SK-N-SH (cell line): ENCODE measurements at regions of chr11 and their contacts with region 1.

Region 1: GRCh38 chr11:67613960-67614715 is 7.4 kb downstream of the NDUFV1 start:
- DNase-seq: peak; percentile 84
- H3K4me3 ChIP-seq: no peak overlapping the region
- H3K27ac ChIP-seq: no peak overlapping the region
- H3K4me1 ChIP-seq: no peaks in the 10 kb centered on the region; a peak in 1 of 4 replicates
- H3K27me3 ChIP-seq: no peaks in the 10 kb centered on the region
- CTCF ChIP-seq: peak; percentile 71
- EP300 ChIP-seq: no peak
- RAD21 ChIP-seq: peak; percentile 35

Region 2: GRCh38 chr11:67535561-67535960 is 78.6 kb before region 1 on chr11:
- CTCF ChIA-PET with region 1: no interaction called
- POLR2A ChIA-PET with region 1: no interaction called
- DNase-seq: no peak
- H3K4me3 ChIP-seq: no peak overlapping the region
- H3K27ac ChIP-seq: no peak overlapping the region
- H3K4me1 ChIP-seq: no peaks in the 10 kb centered on the region
- H3K27me3 ChIP-seq: no peaks in the 10 kb centered on the region
- CTCF ChIP-seq: no peak
- EP300 ChIP-seq: no peak
- RAD21 ChIP-seq: no peak

Region 3: DNA sequence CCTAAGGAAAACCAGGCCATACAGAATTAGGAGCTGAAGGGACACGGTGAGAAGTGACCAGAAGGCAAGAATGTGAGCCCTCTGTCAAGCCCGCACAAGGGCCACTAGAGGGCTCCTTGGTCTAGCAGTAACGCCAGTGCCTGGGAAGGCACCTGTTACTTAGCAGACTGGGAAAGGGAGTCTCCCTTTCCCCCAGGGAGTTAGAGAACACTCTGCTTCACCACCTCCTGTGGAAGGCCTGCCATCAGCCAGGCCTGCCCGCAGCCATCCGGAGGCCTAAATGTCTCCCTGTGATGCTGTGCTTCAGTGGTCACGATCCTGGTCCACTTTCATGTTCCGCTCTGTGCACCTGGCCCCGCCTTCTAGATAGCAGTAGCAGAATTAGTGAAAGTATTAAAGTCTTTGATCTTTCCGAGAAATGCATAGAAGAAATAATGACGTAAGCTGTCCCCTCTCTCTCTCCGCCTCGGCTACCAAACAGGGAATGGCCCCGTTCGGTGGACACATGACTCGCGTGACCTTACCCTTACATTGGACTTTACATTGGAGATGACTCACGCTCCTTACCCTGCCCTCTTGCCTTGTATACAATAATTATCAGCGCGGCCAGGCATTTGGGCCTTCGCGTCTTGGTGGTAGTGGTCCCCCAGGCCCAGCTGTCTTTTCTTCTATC is 41.3 kb before region 1 on chr11:
- CTCF ChIA-PET with region 1: interaction called, 14 read pairs
- POLR2A ChIA-PET with region 1: no interaction called
- DNase-seq: peak; percentile 53
- H3K4me3 ChIP-seq: no peak overlapping the region
- H3K27ac ChIP-seq: no peak overlapping the region
- H3K4me1 ChIP-seq: peaks cover 0 to 6% of the 10 kb centered on the region in 2 experiments; a peak in 1 of 4 replicates
- H3K27me3 ChIP-seq: peaks cover 6% of the 10 kb centered on the region
- CTCF ChIP-seq: peak; percentile 64
- EP300 ChIP-seq: no peak
- RAD21 ChIP-seq: peak; percentile 79

Region 4: GRCh38 chr11:67583247-67584204 is 30.6 kb before region 1 on chr11 and contains the start of gene GSTP1:
- CTCF ChIA-PET with region 1: interaction called, 24 read pairs
- POLR2A ChIA-PET with region 1: interaction called, 4 read pairs
- DNase-seq: peak; percentile 95
- H3K4me3 ChIP-seq: peak within 1 kb of the TSS; percentile 68 to 77
- H3K27ac ChIP-seq: peak within 1 kb of the TSS; percentile 61 to 84
- H3K4me1 ChIP-seq: peaks cover 10 to 14% of the 10 kb centered on the region in 2 experiments; a peak in 3 of 4 replicates
- H3K27me3 ChIP-seq: no peaks in the 10 kb centered on the region
- CTCF ChIP-seq: peak; percentile 74
- EP300 ChIP-seq: peak in 1 of 2 experiments; percentile 34; a peak in 2 of 4 replicates
- RAD21 ChIP-seq: peak; percentile 51
- polyA plus RNA-seq, gene GSTP1: 488 and 745 TPM in 2 replicates

Region 5: GRCh38 chr11:67592880-67593564 is 21.1 kb before region 1 on chr11:
- CTCF ChIA-PET with region 1: interaction called, 10 read pairs
- POLR2A ChIA-PET with region 1: interaction called, 3 read pairs
- DNase-seq: no peak
- H3K4me3 ChIP-seq: no peak overlapping the region
- H3K27ac ChIP-seq: no peak overlapping the region
- H3K4me1 ChIP-seq: no peaks in the 10 kb centered on the region
- H3K27me3 ChIP-seq: no peaks in the 10 kb centered on the region
- CTCF ChIP-seq: no peak
- EP300 ChIP-seq: no peak
- RAD21 ChIP-seq: no peak

Region 6: DNA sequence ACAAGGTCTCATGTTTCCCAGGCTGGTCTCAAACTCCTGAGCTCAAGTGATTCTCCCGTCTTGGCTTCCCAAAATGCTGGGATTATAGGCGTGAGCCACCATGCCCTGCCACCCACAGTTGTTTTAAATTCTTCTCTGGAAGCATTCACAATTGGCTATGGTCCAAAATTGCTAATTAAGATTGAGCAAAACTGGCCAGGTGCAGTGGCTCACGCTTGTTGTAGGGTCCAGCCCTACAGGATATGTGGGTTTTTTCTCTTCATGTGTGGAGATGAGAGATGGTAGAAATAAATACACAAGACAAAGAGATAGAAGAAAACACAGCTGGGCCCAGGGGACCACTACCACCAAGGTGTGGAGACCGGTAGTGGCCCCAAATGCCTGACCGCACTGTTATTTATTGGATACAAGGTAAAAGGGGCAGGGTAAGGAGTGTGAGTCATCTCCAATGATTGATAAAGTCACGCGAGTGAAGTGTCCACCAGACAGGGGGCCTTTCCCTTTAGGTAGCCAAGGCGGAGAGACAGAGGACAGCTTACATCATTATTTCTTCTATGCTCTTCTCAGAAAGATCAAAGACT is 44.6 kb after region 1 on chr11:
- CTCF ChIA-PET with region 1: interaction called, 14 read pairs
- POLR2A ChIA-PET with region 1: no interaction called
- DNase-seq: no peak
- H3K4me3 ChIP-seq: no peak overlapping the region
- H3K27ac ChIP-seq: no peak overlapping the region
- H3K4me1 ChIP-seq: no peaks in the 10 kb centered on the region; a peak in 1 of 4 replicates
- H3K27me3 ChIP-seq: peaks cover 5% of the 10 kb centered on the region; the same call in 1 of the 2 replicates
- CTCF ChIP-seq: no peak
- EP300 ChIP-seq: no peak
- RAD21 ChIP-seq: no peak

Region 7: GRCh38 chr11:67698247-67698646 is 84.1 kb after region 1 on chr11:
- CTCF ChIA-PET with region 1: no interaction called
- POLR2A ChIA-PET with region 1: no interaction called
- DNase-seq: no peak
- H3K4me3 ChIP-seq: no peak overlapping the region
- H3K27ac ChIP-seq: no peak overlapping the region
- H3K4me1 ChIP-seq: no peaks in the 10 kb centered on the region
- H3K27me3 ChIP-seq: peaks cover 19% of the 10 kb centered on the region; the same call in 1 of the 2 replicates
- CTCF ChIP-seq: peak; percentile 6; the same call in 1 of the 2 replicates
- EP300 ChIP-seq: no peak
- RAD21 ChIP-seq: no peak

Region 8: GRCh38 chr11:68106165-68106957 is 492.2 kb after region 1 on chr11:
- CTCF ChIA-PET with region 1: no interaction called
- POLR2A ChIA-PET with region 1: no interaction called
- DNase-seq: no peak
- H3K4me3 ChIP-seq: no peak overlapping the region
- H3K27ac ChIP-seq: no peak overlapping the region
- H3K4me1 ChIP-seq: peaks cover 0 to 3% of the 10 kb centered on the region in 2 experiments; a peak in 1 of 4 replicates
- H3K27me3 ChIP-seq: no peaks in the 10 kb centered on the region
- CTCF ChIP-seq: no peak
- EP300 ChIP-seq: no peak
- RAD21 ChIP-seq: no peak